CD8-positive, alpha-beta T cell (primary cell): ENCODE measurements at regions of chr17 and their contacts with region 1.

Region 1: DNA sequence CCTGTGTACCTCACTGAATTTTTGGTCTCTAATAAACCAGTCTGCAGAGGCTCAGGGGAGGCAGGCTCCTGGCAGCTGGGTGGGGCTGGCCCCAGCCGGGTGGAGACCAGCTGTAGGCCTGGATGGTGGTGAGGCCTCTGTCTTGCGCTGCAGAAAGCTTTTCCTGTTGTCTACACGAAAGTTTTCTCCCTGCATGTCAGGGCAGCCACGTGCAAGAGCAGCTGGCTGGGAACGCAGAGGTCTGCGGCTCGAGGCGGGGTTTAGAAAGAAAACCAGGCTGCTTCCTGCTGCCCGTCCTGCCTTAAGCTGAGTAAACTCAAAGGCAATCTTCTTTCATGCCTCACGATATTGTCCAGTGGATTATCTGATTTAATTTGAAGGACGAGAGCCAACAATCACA is 2.4 kb downstream of the SERPINF1 start:
- DNase-seq: peak; percentile 33 to 89 (median 70)
- ATAC-seq: peak; percentile 94
- H3K4me3 ChIP-seq: no peak overlapping the region
- H3K4me3 Mint-ChIP-seq: peak overlapping the region; percentile 67
- H3K27ac ChIP-seq: peak overlapping the region; percentile 11 to 53
- H3K27ac Mint-ChIP-seq: peak overlapping the region; percentile 96
- H3K4me1 ChIP-seq: peaks cover 44% of the 10 kb centered on the region
- H3K4me1 Mint-ChIP-seq: peaks cover 48% of the 10 kb centered on the region
- H3K27me3 ChIP-seq: no peaks in the 10 kb centered on the region
- H3K27me3 Mint-ChIP-seq: no peaks in the 10 kb centered on the region
- CTCF ChIP-seq: no peak

Region 2: DNA sequence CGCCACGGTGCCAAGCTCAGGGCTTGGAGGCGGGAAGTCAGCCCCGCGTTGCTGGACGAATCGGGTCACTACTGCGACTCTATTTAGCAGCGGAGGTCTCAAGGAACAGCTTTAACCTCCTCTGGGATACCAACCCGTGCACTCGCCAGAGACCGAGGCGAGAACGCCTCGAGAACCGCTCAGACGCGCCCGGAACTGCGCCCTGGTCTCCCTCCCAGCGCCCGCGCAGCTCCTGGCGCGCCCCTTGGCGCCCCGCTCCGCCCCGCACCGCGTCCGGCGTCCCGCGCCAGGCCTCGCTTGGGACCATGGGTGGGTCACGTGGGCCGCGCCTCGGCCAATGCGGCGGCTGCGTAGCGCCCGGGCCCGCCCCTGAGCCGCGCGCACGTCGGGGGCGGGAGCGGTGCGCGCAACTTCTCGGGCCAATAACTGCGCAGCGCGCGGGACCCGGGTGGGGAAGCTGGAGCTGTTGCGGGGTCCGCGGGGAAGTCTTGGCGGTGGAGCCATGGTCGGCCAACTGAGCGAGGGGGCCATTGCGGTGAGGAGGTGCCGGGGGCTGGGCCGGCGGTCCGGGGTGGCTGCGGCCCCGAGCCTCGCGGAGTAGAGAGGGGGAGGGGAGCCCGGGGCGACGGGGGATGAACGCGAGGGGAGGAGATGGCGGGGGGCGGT is 65.4 kb after region 1 on chr17 and contains the starts of genes RPA1 and SMYD4:
- CTCF ChIA-PET with region 1: no interaction called
- POLR2A ChIA-PET with region 1: interaction called, 9 read pairs
- intact Hi-C with region 1: loop called (anchors 1 to 2 kb)
- DNase-seq: peak; percentile 74 to 95 (median 86)
- ATAC-seq: peak; percentile 96
- H3K4me3 ChIP-seq: peak within 1 kb of the TSS; percentile 81 to 82
- H3K4me3 Mint-ChIP-seq: peak within 1 kb of the TSS; percentile 94
- H3K27ac ChIP-seq: peak within 1 kb of the TSS; percentile 74 to 77
- H3K27ac Mint-ChIP-seq: peak within 1 kb of the TSS; percentile 92
- H3K4me1 ChIP-seq: peaks cover 24% of the 10 kb centered on the region
- H3K4me1 Mint-ChIP-seq: peaks cover 59% of the 10 kb centered on the region
- H3K27me3 ChIP-seq: no peaks in the 10 kb centered on the region
- H3K27me3 Mint-ChIP-seq: no peaks in the 10 kb centered on the region
- CTCF ChIP-seq: no peak
- total RNA-seq, gene RPA1: 35.1 to 38.1 TPM
- total RNA-seq, gene SMYD4: 8.9 to 10.1 TPM